Tibial artery (tissue), 4 donors: ENCODE measurements at regions of chr4 and their contacts with region 1.

Region 1: DNA sequence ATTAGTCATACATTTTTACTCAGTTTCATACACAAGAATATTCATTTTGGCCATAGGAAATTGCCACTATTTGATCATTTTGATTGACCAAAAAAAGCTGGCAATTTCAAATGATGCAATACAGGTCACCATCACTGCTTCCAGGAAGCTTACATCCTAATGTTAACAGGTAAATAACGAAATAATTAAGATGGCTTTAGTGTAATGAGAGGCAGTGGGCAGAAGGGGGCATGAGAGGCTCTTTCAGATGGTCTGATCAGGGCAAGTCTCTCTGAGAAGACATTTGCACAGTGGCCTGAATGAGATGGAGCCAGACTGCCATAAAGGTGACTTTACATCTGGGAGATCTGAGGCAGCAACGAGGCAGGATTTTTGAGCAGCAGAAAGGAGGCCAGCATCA is 170.7 kb downstream of the SLIT2 start:
- DNase-seq: no peak
- H3K4me3 ChIP-seq: no peak overlapping the region
- H3K27ac ChIP-seq: no peak overlapping the region
- H3K4me1 ChIP-seq: peaks cover 0 to 5% (median 0%) of the 10 kb centered on the region in 4 donors
- H3K27me3 ChIP-seq: no peaks in the 10 kb centered on the region
- CTCF ChIP-seq: peak; percentile 32 to 37

Region 2: GRCh38 chr4:20065952-20066351 is 356.4 kb before region 1 on chr4:
- intact Hi-C with region 1: loop called (anchors 5 kb)
- DNase-seq: no peak
- H3K4me3 ChIP-seq: no peak overlapping the region
- H3K27ac ChIP-seq: no peak overlapping the region
- H3K4me1 ChIP-seq: no peaks in the 10 kb centered on the region
- H3K27me3 ChIP-seq: no peaks in the 10 kb centered on the region
- CTCF ChIP-seq: no peak

Region 3: DNA sequence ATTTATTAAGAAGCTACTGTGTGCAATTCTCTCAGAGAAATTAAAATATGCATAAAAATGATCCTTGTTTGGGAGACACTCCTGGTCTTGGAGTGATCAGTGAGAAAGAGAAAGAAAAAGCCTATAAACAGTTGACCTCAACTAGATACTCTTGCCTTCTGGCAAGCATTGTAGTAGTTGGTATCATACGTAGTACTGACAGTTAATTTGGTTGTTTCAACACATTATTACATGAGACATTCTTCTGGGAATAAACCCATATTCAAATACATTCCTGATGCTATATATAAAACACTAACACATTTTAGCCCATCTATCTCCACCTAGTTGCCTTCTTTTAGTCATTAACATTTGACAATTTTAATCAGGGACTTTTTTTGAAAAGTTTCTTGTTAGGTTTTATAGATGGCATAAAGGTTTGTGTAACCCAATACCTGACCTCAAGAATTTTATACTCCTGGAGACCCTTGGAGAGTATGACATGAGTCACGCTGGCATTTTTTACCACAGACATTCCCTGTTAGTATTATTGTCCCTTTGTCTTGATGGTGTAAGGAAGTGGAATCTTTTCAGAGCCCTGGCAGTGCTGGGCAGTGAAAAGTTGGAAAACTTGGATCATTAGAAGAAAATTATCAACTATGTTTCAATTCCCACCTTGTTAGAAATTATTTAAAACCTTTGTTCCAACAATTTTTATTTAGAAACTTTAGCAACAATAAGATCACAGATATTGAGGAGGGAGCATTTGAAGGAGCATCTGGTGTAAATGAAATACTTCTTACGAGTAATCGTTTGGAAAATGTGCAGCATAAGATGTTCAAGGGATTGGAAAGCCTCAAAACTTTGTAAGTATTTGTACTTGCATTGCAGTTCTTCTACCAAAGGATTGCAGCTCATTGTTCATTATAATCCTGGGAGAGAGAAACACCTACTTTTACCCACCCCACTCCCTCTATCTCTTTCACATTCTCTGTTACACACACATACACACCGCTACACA is 110.8 kb after region 1 on chr4:
- intact Hi-C with region 1: loop called (anchors 10 kb)
- DNase-seq: no peak
- H3K4me3 ChIP-seq: no peak overlapping the region
- H3K27ac ChIP-seq: no peak overlapping the region
- H3K4me1 ChIP-seq: no peaks in the 10 kb centered on the region
- H3K27me3 ChIP-seq: no peaks in the 10 kb centered on the region
- CTCF ChIP-seq: no peak

Region 4: DNA sequence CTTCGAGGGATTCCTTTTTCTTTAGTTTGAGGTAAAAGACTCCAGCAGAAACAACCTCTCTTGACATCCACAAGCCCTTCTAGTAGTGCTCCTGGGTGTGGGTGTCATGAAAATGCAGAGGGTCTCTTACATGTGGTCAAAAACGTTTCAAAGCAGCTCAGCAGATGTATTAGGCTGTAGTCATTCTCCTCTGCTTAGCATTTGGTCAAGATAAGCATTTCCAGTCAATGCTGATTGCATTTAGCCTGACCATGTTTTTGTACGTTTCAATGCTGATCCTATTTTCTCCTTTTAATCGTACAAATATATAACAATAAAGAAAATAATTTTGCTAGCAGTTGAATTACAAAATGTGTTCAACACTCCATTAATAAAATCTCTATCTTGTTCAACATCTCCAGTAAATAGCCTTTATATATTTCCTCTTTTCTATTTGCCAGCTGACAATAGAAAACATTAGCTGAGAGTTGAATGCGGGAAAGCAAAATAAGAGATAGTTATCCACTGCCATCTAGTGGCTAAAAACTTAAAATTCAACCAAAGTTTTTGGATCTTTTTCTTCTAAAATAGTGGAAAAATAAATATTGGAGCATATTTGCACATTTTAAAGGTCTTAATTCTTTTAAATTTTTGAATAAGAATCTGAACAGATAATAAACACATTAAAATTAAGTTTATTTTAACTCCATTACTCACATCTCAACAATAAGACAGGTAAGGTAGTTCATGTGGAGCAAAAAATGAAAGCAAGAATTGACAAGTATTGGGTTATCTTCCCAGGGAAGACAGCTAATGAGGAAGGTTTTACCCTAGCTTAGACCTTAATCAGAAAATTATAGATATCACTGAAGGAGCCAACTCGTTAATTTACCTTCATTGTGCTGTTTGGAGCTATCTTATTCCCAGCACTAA is 262.7 kb after region 1 on chr4:
- intact Hi-C with region 1: loop called (anchors 10 kb)
- DNase-seq: no peak
- H3K4me3 ChIP-seq: no peak overlapping the region
- H3K27ac ChIP-seq: no peak overlapping the region
- H3K4me1 ChIP-seq: no peaks in the 10 kb centered on the region
- H3K27me3 ChIP-seq: no peaks in the 10 kb centered on the region
- CTCF ChIP-seq: peak; percentile 53 to 54

Region 5: DNA sequence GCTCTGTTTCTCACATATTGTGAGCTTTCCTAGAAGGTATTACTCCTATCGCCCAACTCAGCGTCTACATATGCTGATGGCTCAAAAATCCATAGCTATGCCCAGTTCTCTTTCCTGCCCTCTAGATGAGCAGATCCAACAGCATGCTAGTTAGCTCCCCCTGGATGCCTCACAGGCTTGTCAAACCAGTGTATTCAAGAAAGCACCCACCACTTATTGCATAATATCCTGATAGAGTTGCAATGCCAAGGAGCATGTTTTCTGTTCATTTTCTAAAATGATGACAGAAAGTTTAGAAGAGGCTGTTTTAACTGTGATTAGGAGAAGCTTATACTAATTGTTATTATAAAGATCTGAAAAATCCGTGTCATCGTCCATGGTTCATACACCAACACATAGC is 276.0 kb after region 1 on chr4:
- intact Hi-C with region 1: no loop called
- DNase-seq: no peak
- H3K4me3 ChIP-seq: no peak overlapping the region
- H3K27ac ChIP-seq: no peak overlapping the region
- H3K4me1 ChIP-seq: peaks cover 0 to 23% (median 9%) of the 10 kb centered on the region in 4 donors
- H3K27me3 ChIP-seq: no peaks in the 10 kb centered on the region
- CTCF ChIP-seq: no peak